GM13977 (cell line): ENCODE measurements at regions of chr11 and their contacts with region 1.

Region 1: GRCh38 chr11:57349491-57350274 is 11.5 kb downstream of the P2RX3 start:
- DNase-seq: peak; percentile 73
- CTCF ChIP-seq: peak; percentile 90

Region 2: DNA sequence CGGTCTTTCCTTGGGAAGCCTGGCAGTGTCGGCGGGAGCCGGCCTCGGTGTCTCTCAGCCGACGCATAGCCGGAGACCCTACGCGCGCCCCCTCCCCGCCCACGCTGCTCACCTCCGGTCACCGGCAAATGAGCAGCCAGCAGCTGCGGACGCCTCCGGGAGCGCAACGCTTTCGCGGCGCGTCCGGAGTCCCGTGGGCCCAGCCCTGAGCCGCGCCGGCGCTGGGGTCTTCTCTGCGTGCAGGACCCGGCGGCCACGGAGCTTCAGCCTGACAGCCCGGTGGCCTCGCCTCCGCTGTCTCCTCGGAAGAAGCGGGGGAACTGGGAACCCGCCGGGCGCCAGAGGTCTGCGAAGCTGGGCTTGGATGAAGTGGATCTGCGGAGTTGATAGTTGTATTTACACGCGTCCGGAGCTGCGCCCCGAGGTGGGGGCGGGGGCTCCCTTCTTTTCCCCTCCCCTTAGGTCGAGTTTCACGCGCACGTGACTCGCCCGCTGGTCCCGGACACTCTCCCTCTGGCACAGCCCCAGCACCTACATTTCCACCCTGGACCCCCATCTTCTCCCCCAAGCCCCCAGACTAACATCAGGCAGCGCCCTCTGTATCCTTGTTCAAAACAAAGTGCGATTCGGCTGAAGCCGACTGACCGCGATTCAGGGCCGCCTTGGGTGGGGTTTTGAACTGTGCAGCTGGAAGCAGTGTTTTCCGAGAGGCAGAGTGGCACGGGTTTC is 165.8 kb after region 1 on chr11 and contains the start of gene SLC43A1:
- in situ Hi-C with region 1: loop called (anchors 25 kb)
- DNase-seq: peak; percentile 70
- CTCF ChIP-seq: no peak

Region 3: GRCh38 chr11:57644748-57645688 is 295.3 kb after region 1 on chr11:
- in situ Hi-C with region 1: loop called (anchors 25 kb)
- DNase-seq: peak; percentile 84
- CTCF ChIP-seq: peak; percentile 83